ENCODE measurements at regions of chr2 and their contacts with region 1.

Region 1: GRCh38 chr2:135585586-135585985 is 54.3 kb downstream of the R3HDM1 start:
- DNase-seq: no peak
- ATAC-seq: peak; percentile 46
- H3K4me3 Mint-ChIP-seq: no peak overlapping the region
- H3K27ac Mint-ChIP-seq: no peak overlapping the region
- H3K4me1 Mint-ChIP-seq: peaks cover 39% of the 10 kb centered on the region
- H3K27me3 Mint-ChIP-seq: no peaks in the 10 kb centered on the region
- CTCF ChIP-seq: no peak

Region 2: GRCh38 chr2:135473567-135473966 is 112.0 kb before region 1 on chr2:
- CTCF ChIA-PET with region 1: interaction called, 13 read pairs
- POLR2A ChIA-PET with region 1: no interaction called
- DNase-seq: peak; percentile 21
- ATAC-seq: peak; percentile 43; the same call in 1 of the 2 replicates
- H3K4me3 Mint-ChIP-seq: no peak overlapping the region
- H3K27ac Mint-ChIP-seq: no peak overlapping the region
- H3K4me1 Mint-ChIP-seq: no peaks in the 10 kb centered on the region
- H3K27me3 Mint-ChIP-seq: no peaks in the 10 kb centered on the region
- CTCF ChIP-seq: no peak

Region 3: GRCh38 chr2:135512099-135512498 is 73.5 kb before region 1 on chr2:
- CTCF ChIA-PET with region 1: no interaction called
- POLR2A ChIA-PET with region 1: no interaction called
- DNase-seq: no peak
- ATAC-seq: no peak
- H3K4me3 Mint-ChIP-seq: no peak overlapping the region
- H3K27ac Mint-ChIP-seq: no peak overlapping the region
- H3K4me1 Mint-ChIP-seq: no peaks in the 10 kb centered on the region
- H3K27me3 Mint-ChIP-seq: no peaks in the 10 kb centered on the region
- CTCF ChIP-seq: no peak

Region 4: GRCh38 chr2:135531231-135532228 is 54.1 kb before region 1 on chr2 and contains the start of gene R3HDM1:
- CTCF ChIA-PET with region 1: interaction called, 10 read pairs
- POLR2A ChIA-PET with region 1: no interaction called
- DNase-seq: peak; percentile 95
- ATAC-seq: peak; percentile 89
- H3K4me3 Mint-ChIP-seq: no peak within 1 kb of the TSS
- H3K27ac Mint-ChIP-seq: peak within 1 kb of the TSS; percentile 78
- H3K4me1 Mint-ChIP-seq: peaks cover 27% of the 10 kb centered on the region
- H3K27me3 Mint-ChIP-seq: no peaks in the 10 kb centered on the region
- CTCF ChIP-seq: no peak
- total RNA-seq, gene R3HDM1: 58.4 to 60.4 TPM (median 59.9 TPM) in 3 replicates

Region 5: DNA sequence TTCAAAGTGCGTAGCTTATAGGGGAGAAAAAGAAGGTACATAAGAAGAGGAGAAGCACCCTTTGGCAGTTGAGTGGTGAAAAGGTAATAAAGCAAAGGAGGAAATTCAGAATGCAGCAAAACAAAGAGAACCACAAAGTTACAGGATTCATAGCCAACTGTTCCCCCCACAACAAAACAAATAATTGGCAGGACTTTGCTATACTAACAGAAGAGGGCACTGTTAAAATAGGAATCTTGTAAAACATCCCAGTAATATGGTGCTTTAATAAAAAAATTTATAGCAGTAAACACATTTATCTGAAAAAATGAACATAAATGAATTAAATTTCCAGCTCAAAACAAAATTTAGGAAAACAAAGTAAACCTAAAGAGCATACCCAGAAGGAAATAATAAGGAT is 12.0 kb before region 1 on chr2:
- CTCF ChIA-PET with region 1: interaction called, 11 read pairs
- POLR2A ChIA-PET with region 1: no interaction called
- DNase-seq: no peak
- ATAC-seq: no peak
- H3K4me3 Mint-ChIP-seq: no peak overlapping the region
- H3K27ac Mint-ChIP-seq: 0 out of 2 replicates have a peak overlapping the region, but pooled peaks have one; percentile 28
- H3K4me1 Mint-ChIP-seq: peaks cover 9% of the 10 kb centered on the region
- H3K27me3 Mint-ChIP-seq: no peaks in the 10 kb centered on the region
- CTCF ChIP-seq: no peak